ENCODE measurements at regions of chr16 and their contacts with region 1.

Region 1: GRCh38 chr16:28823872-28824716 is 1.3 kb downstream of the ATXN2L start:
- DNase-seq: peak; percentile 98
- ATAC-seq: peak; percentile 81 to 84
- H3K4me3 ChIP-seq: peak overlapping the region; percentile 89 to 99 (median 96)
- H3K27ac ChIP-seq: peak overlapping the region; percentile 99 to 100 (median 100)
- H3K4me1 ChIP-seq: peaks cover 20% of the 10 kb centered on the region in 2 donors
- H3K27me3 ChIP-seq: no peaks in the 10 kb centered on the region
- CTCF ChIP-seq: peak in 4 of 5 experiments; percentile 41 to 45 (median 44)
- POLR2A ChIP-seq: peak; percentile 79 to 84

Region 2: DNA sequence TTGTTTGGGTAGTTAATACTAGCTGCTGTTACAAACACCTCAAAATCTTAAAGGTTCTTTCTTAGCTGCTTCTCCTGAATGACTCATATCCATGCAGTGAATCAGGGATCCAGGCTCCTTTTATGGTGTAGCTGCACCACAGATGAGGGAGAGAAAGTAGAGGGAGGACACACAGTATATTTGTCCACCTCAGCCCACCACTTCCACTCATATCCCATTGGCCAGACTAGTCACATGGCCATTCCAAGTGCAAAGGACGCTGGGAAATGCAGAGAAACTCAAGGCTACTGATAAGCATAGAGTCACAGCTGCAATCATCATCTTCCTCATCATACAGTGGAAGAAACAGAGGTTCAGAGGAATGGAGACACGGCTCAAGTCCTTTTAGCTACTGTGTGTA is 824.4 kb before region 1 on chr16:
- in situ Hi-C with region 1: no loop called
- intact Hi-C with region 1: no loop called
- DNase-seq: no peak
- ATAC-seq: no peak
- H3K4me3 ChIP-seq: no peak overlapping the region
- H3K27ac ChIP-seq: no peak overlapping the region
- H3K4me1 ChIP-seq: no peaks in the 10 kb centered on the region
- H3K27me3 ChIP-seq: peaks cover 0 to 4% (median 0%) of the 10 kb centered on the region in 3 donors
- CTCF ChIP-seq: no peak
- POLR2A ChIP-seq: no peak

Region 3: DNA sequence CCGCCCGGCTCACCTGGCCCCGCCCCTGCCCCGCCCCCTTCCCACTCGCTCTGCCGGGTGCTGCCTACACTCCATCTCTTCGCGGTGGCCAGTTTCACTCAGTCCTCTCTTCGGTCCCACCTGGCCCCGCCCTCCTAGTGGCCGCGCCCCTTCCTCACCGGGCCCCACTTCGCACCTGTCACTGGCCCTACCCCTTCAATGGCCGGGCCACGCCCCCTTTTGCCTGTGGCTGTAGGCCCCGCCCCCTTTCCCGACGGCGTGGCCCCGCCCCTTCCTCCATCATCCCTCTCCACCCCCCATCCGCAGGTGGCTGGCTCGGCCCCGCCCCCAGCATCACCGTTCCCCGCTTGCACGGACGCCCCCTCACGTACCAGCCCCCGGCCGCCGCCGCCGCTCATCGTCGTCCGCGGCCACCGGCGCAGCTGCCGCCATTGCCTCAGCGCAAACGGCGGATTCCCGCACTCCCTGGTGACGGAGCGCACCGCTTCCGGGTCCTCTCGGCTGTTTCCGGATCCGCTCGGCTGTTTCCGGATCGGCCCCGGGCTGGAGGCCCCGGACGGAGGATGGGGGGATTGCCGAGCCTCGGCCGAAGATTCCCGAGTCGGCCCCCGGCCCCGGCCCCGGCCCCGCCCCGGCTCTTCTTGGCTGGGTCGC is 100.8 kb after region 1 on chr16 and contains the start of gene RABEP2:
- in situ Hi-C with region 1: no loop called
- intact Hi-C with region 1: loop called (anchors 2 kb)
- DNase-seq: peak; percentile 77 to 89
- ATAC-seq: peak; percentile 91 to 96
- H3K4me3 ChIP-seq: peak within 1 kb of the TSS; percentile 67 to 99 (median 86)
- H3K27ac ChIP-seq: peak within 1 kb of the TSS; percentile 83 to 99 (median 94)
- H3K4me1 ChIP-seq: peaks cover 9% of the 10 kb centered on the region in 2 donors
- H3K27me3 ChIP-seq: no peaks in the 10 kb centered on the region
- CTCF ChIP-seq: no peak
- POLR2A ChIP-seq: peak; percentile 63 to 69
- total RNA-seq, gene RABEP2: 2.9 to 13.9 (median 6.4) TPM

Region 4: DNA sequence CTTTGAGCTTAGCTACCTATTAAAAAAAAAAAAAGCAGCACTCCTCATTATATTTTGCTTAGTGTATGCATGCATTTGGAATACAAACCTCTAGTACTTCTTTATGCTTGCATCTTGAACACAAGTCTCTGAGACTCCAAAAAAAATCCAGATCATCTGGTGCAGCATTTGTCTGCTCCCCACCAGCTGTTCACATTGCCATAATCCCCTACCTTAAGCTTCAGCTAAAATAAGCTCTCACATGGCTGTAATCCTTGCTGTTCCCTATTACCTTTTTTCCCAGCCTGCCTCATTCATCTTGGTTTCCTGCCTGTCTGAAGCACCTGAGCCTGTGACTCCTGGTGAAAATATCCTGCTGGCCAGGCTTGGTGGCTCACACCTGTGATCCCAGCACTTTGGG is 119.2 kb after region 1 on chr16:
- in situ Hi-C with region 1: loop called in 3 of 4 experiments (anchors 5 to 10 kb)
- intact Hi-C with region 1: no loop called
- DNase-seq: no peak
- ATAC-seq: no peak
- H3K4me3 ChIP-seq: no peak overlapping the region
- H3K27ac ChIP-seq: no peak overlapping the region
- H3K4me1 ChIP-seq: peaks cover 5 to 9% of the 10 kb centered on the region in 2 donors
- H3K27me3 ChIP-seq: no peaks in the 10 kb centered on the region
- CTCF ChIP-seq: no peak
- POLR2A ChIP-seq: no peak

Region 5: DNA sequence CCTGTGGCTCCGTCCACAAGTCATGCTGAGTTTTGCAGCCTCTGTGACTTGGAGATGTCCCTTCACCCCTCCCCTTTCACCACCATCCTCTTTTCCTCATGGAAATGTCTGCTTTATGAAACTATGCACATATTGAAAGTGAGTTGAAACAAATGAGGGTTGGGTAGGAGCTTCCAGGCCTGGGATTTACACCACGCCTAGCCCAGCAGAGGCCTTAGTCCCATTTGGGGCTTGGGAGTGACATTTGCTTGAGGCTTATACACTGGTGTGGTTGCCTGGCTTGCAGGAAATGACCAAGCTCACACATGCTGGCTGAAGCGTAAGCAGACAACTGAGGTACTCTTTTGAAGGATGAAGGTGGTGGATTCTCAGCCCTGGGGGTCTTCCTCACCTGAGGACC is 140.0 kb after region 1 on chr16:
- in situ Hi-C with region 1: no loop called
- intact Hi-C with region 1: no loop called
- DNase-seq: no peak
- ATAC-seq: no peak
- H3K4me3 ChIP-seq: no peak overlapping the region
- H3K27ac ChIP-seq: no peak overlapping the region
- H3K4me1 ChIP-seq: no peaks in the 10 kb centered on the region
- H3K27me3 ChIP-seq: no peaks in the 10 kb centered on the region
- CTCF ChIP-seq: no peak
- POLR2A ChIP-seq: no peak